PC-3 (cell line): ENCODE measurements at regions of chr5 and their contacts with region 1.

Region 1: GRCh38 chr5:42057254-42057690 is 132.2 kb downstream of the FBXO4 start:
- DNase-seq: peak; percentile 86
- ATAC-seq: peak; percentile 62
- H3K4me3 ChIP-seq: no peak overlapping the region
- H3K27ac ChIP-seq: no peak overlapping the region
- H3K4me1 ChIP-seq: peaks cover 11% of the 10 kb centered on the region; the same call in 1 of the 2 replicates
- H3K27me3 ChIP-seq: peaks cover 9% of the 10 kb centered on the region
- CTCF ChIP-seq: peak; percentile 93

Region 2: GRCh38 chr5:41924872-41925554 is 132.3 kb before region 1 on chr5 and contains the start of gene FBXO4:
- CTCF ChIA-PET with region 1: interaction called, 3 read pairs
- POLR2A ChIA-PET with region 1: no interaction called
- intact Hi-C with region 1: loop called (anchors 10 kb)
- DNase-seq: peak; percentile 89
- ATAC-seq: peak; percentile 93
- H3K4me3 ChIP-seq: peak within 1 kb of the TSS; percentile 84
- H3K27ac ChIP-seq: peak within 1 kb of the TSS; percentile 74
- H3K4me1 ChIP-seq: peaks cover 30% of the 10 kb centered on the region
- H3K27me3 ChIP-seq: no peaks in the 10 kb centered on the region
- CTCF ChIP-seq: peak; percentile 74
- total RNA-seq, gene FBXO4: 11.5 and 18.1 TPM in 2 replicates

Region 3: DNA sequence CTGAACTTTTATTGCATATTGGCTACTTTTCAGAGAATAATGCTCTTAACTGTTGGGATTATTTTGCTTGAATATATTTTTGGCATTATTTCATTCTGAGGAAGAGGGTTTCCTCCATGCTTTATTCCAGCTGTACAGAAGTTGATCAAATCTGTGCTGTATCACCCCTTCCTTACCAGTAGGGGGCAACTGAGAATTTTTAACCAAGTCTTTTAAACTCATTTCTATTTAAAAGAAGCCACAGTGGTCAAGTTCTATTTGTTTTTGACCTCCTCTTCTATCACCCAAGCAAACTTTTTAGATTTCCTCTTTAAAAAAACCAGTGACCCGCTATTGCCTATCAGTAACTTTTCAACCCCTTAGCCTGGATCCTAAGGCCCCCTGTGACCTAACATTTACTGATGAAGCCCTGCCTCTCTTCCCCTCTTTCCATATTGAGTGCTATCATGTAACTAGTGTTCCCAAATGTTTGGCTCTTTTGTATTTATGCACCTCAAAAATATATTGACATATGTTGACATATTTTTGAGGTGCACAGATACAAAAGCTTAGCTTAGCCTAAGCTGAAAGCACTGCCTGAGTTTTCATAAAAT is 51.6 kb before region 1 on chr5:
- CTCF ChIA-PET with region 1: interaction called, 4 read pairs
- POLR2A ChIA-PET with region 1: no interaction called
- intact Hi-C with region 1: loop called (anchors 5 kb)
- DNase-seq: peak; percentile 62
- ATAC-seq: peak; percentile 49
- H3K4me3 ChIP-seq: no peak overlapping the region
- H3K27ac ChIP-seq: no peak overlapping the region
- H3K4me1 ChIP-seq: no peaks in the 10 kb centered on the region
- H3K27me3 ChIP-seq: no peaks in the 10 kb centered on the region
- CTCF ChIP-seq: peak; percentile 88